Activated CD8-positive, alpha-beta T cell treated with anti-CD3 and anti-CD28 coated beads, Interleukin-2, amount 10 ng/mL, durations not matched to agents 7 days and 5 days (primary cell): ENCODE measurements at regions of chr19 and their contacts with region 1.

Region 1: DNA sequence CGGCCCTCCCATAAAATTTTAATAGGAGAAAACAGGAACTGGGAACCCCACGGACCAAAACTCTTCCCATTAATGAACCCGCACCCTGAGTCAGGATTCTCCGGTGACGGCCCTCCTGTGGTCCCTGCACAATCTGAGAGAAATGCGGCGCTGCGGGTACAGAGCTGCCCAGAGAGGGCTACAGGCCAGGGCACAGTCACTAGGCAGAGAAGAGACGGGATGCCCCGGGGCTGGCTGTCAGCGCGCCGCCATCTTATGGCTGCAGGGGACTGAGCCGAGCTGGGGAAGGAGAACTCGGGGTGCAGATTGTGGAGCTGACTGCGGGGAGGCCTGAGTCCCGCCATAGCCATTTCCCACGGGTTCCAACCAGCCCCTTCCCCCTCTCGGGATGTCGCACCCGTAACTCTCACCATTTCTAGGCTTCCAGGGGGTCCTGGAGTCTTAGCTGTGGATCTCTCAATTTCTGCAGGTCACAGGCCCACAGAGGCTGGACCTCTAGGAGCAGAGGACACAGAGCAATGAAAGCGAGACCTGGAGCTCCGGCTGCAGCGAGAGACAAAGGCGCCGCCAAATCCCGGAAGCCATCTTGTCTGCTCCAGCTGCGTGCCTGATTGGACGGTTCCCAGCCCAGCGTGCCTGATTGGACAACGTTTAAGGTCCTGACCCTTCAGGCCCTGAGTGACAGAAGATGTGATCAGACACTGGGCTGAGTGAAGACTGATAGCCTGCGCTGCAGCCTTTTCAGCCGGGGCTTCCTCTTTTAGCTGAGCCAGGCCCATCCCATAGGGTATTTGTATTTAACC is at the start of gene ZNF675:
- DNase-seq: peak; percentile 94
- ATAC-seq: peak; percentile 96
- H3K4me3 Mint-ChIP-seq: peak within 1 kb of the TSS; percentile 99
- H3K27ac Mint-ChIP-seq: peak within 1 kb of the TSS; percentile 99
- H3K4me1 Mint-ChIP-seq: peaks cover 28% of the 10 kb centered on the region
- H3K27me3 Mint-ChIP-seq: no peaks in the 10 kb centered on the region
- total RNA-seq, gene ZNF675: 23.0 to 23.6 TPM

Region 2: DNA sequence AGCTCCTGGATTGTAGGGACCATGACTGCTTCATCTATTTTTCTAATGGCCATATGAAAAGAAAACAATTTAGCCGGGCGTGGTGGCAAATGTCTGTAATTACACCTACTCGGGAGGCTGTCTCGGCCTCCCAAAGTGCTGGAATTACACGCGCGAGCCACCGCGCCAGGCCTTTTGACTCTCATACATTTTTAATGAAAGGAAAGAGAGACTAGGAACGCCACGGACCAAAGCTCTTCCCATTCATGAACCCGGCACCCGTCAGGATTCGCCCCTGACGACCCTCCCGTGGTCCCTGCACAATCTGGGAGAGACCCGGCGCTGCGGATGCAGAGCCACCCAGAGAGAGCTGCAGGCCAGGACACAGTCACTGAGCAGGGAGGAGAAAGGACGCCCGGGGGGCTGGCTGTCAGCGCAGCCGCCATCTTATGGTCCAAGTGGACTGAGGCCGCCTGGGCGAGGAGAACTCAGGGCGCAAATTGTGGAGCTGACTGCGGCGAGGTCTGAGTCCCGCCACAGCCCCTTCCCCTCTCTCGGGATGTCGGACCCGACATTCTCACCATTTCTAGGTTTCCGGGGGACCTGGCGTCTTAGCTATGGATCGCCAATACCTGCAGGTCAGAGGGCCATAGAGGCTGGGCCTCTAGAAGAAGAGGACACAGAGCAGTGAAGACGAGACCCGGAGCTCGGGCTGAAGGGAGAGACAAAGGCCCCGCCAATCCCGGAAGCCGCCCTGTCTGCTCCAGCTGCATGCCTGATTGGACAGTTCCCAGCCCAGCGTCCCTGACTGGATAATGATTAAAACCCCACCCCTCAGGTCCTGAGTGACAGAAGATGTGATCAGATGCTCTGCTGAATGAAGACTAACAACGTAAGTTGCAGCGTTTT is 71.6 kb after region 1 on chr19 and contains the start of gene ZNF681:
- CTCF ChIA-PET with region 1: interaction called, 10 read pairs
- POLR2A ChIA-PET with region 1: interaction called, 22 read pairs
- DNase-seq: peak; percentile 94
- ATAC-seq: peak; percentile 93
- H3K4me3 Mint-ChIP-seq: peak within 1 kb of the TSS; percentile 96
- H3K27ac Mint-ChIP-seq: peak within 1 kb of the TSS; percentile 96
- H3K4me1 Mint-ChIP-seq: peaks cover 27% of the 10 kb centered on the region
- H3K27me3 Mint-ChIP-seq: no peaks in the 10 kb centered on the region
- total RNA-seq, gene ZNF681: 5.5 to 7.5 TPM

Region 3: GRCh38 chr19:23769691-23770468 is 83.1 kb after region 1 on chr19:
- CTCF ChIA-PET with region 1: no interaction called
- POLR2A ChIA-PET with region 1: no interaction called
- DNase-seq: no peak
- ATAC-seq: no peak
- H3K4me3 Mint-ChIP-seq: no peak overlapping the region
- H3K27ac Mint-ChIP-seq: no peak overlapping the region
- H3K4me1 Mint-ChIP-seq: peaks cover 4% of the 10 kb centered on the region
- H3K27me3 Mint-ChIP-seq: no peaks in the 10 kb centered on the region